AG04450 (cell line): ENCODE measurements at regions of chr19 and their contacts with region 1.

Region 1: DNA sequence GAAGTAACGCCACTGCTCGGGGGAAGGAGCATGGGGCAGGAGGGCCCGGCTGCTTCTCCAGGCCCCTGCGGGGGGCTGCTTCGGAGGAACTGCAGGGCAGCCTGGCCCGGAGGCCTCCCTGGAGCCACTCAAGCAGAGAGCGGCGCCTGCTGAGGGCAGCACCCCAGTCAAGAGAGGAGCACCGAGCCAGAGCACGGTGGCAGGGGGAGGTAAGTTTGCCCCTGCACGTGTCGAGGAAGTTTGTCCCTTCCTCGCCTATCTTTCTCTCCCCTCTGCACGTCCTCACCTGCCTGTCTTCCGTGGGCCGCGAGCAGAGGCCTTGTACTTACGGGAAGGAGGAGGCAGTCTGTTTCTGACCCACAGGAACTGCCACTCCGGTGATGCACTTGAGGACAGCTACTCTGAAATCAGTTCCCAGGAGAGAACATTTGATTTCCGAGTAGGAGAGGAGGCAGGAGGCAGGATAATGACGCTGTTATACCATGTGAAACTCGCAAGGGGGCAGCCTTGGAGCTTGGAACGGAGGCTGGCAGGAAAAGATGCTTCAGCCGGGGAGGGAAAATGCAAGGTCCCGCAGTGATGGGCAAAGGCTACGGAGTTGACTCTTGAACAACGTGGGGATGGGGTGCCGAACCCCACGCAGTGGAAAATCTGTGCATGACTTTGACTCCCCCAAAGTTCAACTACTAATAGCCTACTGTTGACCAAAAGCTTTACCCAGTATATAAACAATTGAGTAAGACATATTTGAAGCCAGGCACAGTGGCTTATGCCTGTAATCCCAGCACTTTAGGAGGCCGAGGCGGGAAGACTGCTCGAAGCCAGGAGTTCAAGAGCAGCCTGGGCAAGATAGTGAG is 5.0 kb downstream of the FFAR1 start:
- DNase-seq: peak; percentile 21
- H3K4me3 ChIP-seq: no peak overlapping the region
- H3K27ac ChIP-seq: no peak overlapping the region
- H3K27me3 ChIP-seq: peaks cover 10% of the 10 kb centered on the region
- CTCF ChIP-seq: peak; percentile 80

Region 2: DNA sequence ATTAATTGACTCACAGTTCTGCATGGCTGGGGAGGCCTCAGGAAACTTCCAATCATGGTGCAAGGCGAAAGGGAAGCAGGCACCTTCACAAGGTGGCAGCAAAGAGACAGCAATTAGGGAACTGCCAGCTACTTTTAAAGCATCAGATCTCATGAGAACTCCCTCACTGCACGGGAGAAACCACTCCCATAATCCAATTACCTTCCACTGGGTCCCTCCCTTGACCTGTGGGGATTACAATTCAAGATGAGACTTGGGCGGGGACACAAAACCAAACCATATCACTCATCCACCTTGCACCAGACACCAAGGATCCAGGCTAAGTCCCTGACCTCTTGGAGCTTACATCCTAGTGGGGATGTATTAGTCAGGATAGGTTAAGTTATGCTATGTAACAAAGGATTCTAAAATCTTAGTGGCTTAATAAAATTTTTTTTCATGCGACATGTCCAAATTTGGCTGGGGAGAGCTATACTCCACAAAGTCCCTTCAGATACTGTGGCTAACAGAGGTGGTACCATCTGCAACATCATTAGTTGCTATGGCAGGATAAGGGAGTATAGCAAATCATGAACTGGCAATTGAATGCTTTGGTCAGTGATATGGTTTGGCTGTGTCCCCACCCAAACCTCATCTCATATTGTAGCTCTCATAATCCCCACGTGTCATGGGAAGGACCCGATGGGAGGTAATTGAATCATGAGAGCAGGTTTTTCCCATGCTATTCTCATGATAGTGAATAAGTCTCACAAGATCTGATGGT is 115.9 kb before region 1 on chr19:
- CTCF ChIA-PET with region 1: no interaction called
- POLR2A ChIA-PET with region 1: no interaction called
- DNase-seq: no peak
- H3K4me3 ChIP-seq: no peak overlapping the region
- H3K27ac ChIP-seq: no peak overlapping the region
- H3K27me3 ChIP-seq: no peaks in the 10 kb centered on the region
- CTCF ChIP-seq: no peak

Region 3: DNA sequence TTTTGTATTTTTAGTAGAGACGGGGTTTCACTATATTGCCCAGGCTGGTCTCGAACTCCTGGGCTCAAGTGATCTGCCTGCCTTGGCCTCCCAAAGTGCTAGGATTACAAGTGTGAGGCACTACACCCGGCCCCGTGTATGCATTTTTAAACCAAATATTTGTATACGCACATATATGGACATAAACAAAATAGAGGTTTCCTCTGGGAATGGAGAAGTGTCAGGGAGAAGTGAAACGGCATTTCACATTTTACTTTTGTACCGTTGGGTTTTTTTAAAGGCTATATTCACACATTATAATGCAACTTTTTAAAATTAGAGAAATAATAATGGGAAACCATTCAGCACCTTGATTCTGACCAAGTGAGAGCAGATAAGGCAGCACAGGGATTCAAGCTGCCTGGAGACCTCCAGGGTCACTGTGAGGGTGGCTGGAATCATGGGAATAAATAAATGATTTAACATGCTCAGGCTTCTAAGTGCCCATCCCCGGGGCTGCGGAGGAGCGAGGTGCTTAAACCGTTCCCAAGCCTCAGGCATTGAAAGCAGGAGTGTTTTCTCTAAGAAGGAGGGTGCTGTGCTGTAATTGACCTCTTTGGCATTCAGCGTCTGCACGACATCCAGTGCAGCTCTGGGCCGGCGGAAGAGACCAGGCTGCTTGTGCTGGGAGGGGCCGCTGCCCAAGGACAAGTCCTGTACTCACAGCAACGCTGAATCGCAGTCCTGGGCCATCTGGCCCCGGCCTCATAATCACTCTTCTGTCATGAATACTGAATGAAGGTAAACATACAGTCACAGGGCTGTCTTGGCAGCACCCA is 42.9 kb after region 1 on chr19:
- CTCF ChIA-PET with region 1: no interaction called
- POLR2A ChIA-PET with region 1: no interaction called
- DNase-seq: no peak
- H3K4me3 ChIP-seq: no peak overlapping the region
- H3K27ac ChIP-seq: no peak overlapping the region
- H3K27me3 ChIP-seq: no peaks in the 10 kb centered on the region
- CTCF ChIP-seq: no peak

Region 4: GRCh38 chr19:35495107-35496064 is 142.7 kb after region 1 on chr19:
- CTCF ChIA-PET with region 1: interaction called, 46 read pairs
- POLR2A ChIA-PET with region 1: no interaction called
- DNase-seq: peak; percentile 10
- H3K4me3 ChIP-seq: no peak overlapping the region
- H3K27ac ChIP-seq: no peak overlapping the region
- H3K27me3 ChIP-seq: peaks cover 7% of the 10 kb centered on the region
- CTCF ChIP-seq: peak; percentile 96